Esophagus muscularis mucosa (tissue), 4 donors: ENCODE measurements at regions of chr10 and their contacts with region 1.

Region 1: GRCh38 chr10:80662577-80663261 is 125.0 kb downstream of the SH2D4B start:
- DNase-seq: no peak
- H3K4me3 ChIP-seq: peak overlapping the region; percentile 34 to 45 (median 38)
- H3K27ac ChIP-seq: peak overlapping the region; percentile 53 to 74 (median 61)
- H3K4me1 ChIP-seq: peaks cover 3 to 13% (median 7%) of the 10 kb centered on the region in 4 donors
- H3K27me3 ChIP-seq: peaks cover 0 to 11% (median 0%) of the 10 kb centered on the region in 4 donors
- CTCF ChIP-seq: peak; percentile 78 to 86 (median 84)
- EP300 ChIP-seq: no peak
- POLR2A ChIP-seq: no peak

Region 2: DNA sequence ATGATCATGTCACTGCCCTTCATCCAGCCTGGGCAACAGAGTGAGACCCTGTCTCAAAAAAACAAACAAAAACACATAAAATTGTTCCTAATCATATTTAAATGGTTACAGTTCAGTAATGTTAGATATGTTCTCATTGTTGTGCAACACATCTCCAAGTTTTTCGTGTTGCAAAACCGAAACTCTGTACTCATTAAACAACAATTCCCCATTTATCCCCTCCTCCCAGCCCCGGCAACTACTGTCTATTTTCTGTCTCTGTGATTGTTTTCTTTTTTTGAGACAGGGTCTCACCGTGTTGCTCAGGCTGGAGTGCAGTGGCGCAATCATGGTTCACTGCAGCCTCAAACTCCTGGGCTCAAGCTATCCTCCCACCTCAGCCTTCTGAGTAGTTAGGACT is 270.4 kb before region 1 on chr10:
- intact Hi-C with region 1: no loop called
- DNase-seq: no peak
- H3K4me3 ChIP-seq: no peak overlapping the region
- H3K27ac ChIP-seq: no peak overlapping the region
- H3K4me1 ChIP-seq: peaks cover 4 to 12% (median 6%) of the 10 kb centered on the region in 4 donors
- H3K27me3 ChIP-seq: peaks cover 0 to 5% (median 0%) of the 10 kb centered on the region in 4 donors
- CTCF ChIP-seq: no peak
- EP300 ChIP-seq: no peak
- POLR2A ChIP-seq: no peak

Region 3: GRCh38 chr10:80924063-80924952 is 261.6 kb after region 1 on chr10:
- intact Hi-C with region 1: loop called (anchors 5 kb)
- DNase-seq: no peak
- H3K4me3 ChIP-seq: no peak overlapping the region
- H3K27ac ChIP-seq: no peak overlapping the region
- H3K4me1 ChIP-seq: no peaks in the 10 kb centered on the region
- H3K27me3 ChIP-seq: peaks cover 0 to 12% (median 0%) of the 10 kb centered on the region in 4 donors
- CTCF ChIP-seq: peak; percentile 33 to 57 (median 56)
- EP300 ChIP-seq: no peak
- POLR2A ChIP-seq: no peak

Region 4: GRCh38 chr10:80976658-80977057 is 313.9 kb after region 1 on chr10:
- intact Hi-C with region 1: no loop called
- DNase-seq: no peak
- H3K4me3 ChIP-seq: no peak overlapping the region
- H3K27ac ChIP-seq: no peak overlapping the region
- H3K4me1 ChIP-seq: no peaks in the 10 kb centered on the region
- H3K27me3 ChIP-seq: no peaks in the 10 kb centered on the region
- CTCF ChIP-seq: no peak
- EP300 ChIP-seq: no peak
- POLR2A ChIP-seq: no peak